ENCODE measurements at regions of chr3 and their contacts with region 1.

Region 1: GRCh38 chr3:12663936-12664908 is at the start of gene RAF1:
- DNase-seq: peak; percentile 98 to 99
- H3K4me3 ChIP-seq: peak within 1 kb of the TSS; percentile 73
- H3K4me3 Mint-ChIP-seq: peak within 1 kb of the TSS; percentile 81
- H3K27ac Mint-ChIP-seq: peak within 1 kb of the TSS; percentile 100
- H3K4me1 ChIP-seq: peaks cover 19% of the 10 kb centered on the region
- H3K4me1 Mint-ChIP-seq: peaks cover 21% of the 10 kb centered on the region
- H3K27me3 ChIP-seq: no peaks in the 10 kb centered on the region
- H3K27me3 Mint-ChIP-seq: no peaks in the 10 kb centered on the region
- CTCF ChIP-seq: no peak
- total RNA-seq, gene RAF1: 93.6 and 98.7 TPM in 2 replicates

Region 2: DNA sequence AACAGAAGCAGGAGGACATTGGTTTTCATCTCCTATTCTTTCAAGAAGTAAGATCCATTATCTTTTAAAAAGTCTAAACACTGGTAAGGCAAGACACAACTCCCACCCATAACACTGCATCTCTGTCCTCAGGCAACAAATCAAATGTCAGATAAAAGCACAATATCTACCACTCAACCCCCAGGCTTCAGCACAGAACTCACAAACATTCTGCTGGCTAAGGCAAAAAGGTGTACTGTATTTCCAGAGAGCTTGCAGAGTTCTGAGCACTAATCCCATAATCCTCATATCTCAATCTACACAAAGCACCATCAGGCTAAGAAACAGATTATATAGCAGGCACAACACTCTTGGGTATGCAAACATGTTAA is 21.2 kb before region 1 on chr3:
- CTCF ChIA-PET with region 1: no interaction called
- POLR2A ChIA-PET with region 1: interaction called, 3 read pairs
- intact Hi-C with region 1: loop called (anchors 2 kb)
- DNase-seq: peak in 1 of 2 experiments; percentile 49
- H3K4me3 ChIP-seq: no peak overlapping the region
- H3K4me3 Mint-ChIP-seq: no peak overlapping the region
- H3K27ac Mint-ChIP-seq: no peak overlapping the region
- H3K4me1 ChIP-seq: peaks cover 27% of the 10 kb centered on the region; the same call in 1 of the 2 replicates
- H3K4me1 Mint-ChIP-seq: peaks cover 13% of the 10 kb centered on the region
- H3K27me3 ChIP-seq: no peaks in the 10 kb centered on the region
- H3K27me3 Mint-ChIP-seq: no peaks in the 10 kb centered on the region
- CTCF ChIP-seq: no peak